Dorsolateral prefrontal cortex (tissue), 120 donors: ENCODE measurements at regions of chr6 and their contacts with region 1.

Region 1: DNA sequence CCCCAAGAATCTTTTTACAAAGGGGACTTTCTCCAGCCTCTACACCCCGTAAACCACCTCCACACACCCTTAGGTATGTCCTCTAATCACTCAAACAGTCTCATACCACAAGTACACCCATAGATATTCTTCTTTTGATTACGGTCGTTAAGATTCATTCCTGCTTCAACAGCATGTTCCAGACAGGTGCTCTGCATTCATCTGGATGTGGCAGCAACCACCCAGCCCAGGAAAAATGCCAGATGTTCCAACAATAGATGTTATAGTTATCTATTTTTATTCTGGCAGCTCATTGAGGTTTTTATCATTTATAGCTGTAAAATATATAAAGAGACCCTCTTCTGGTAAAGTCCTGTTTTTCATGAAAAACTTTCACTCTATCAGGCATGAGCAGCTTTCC is 60.7 kb downstream of the SIM1 start:
- DNase-seq: no peak
- H3K4me3 ChIP-seq: no peak overlapping the region
- H3K27ac ChIP-seq: no peak overlapping the region
- H3K27me3 ChIP-seq: no peaks in the 10 kb centered on the region
- CTCF ChIP-seq: no peak

Region 2: GRCh38 chr6:100417036-100417435 is 13.0 kb after region 1 on chr6:
- intact Hi-C with region 1: loop called in 1 of 2 experiments (anchors 1 kb)
- DNase-seq: no peak
- H3K4me3 ChIP-seq: no peak overlapping the region
- H3K27ac ChIP-seq: no peak overlapping the region
- H3K27me3 ChIP-seq: peaks cover 0 to 16% (median 0%) of the 10 kb centered on the region in 45 donors
- CTCF ChIP-seq: no peak

Region 3: GRCh38 chr6:100538086-100538485 is 134.0 kb after region 1 on chr6:
- intact Hi-C with region 1: no loop called
- DNase-seq: no peak
- H3K4me3 ChIP-seq: no peak overlapping the region
- H3K27ac ChIP-seq: no peak overlapping the region
- H3K27me3 ChIP-seq: no peaks in the 10 kb centered on the region
- CTCF ChIP-seq: no peak